Psoas muscle (tissue), 8 donors: ENCODE measurements at regions of chr11 and their contacts with region 1.

Region 1: GRCh38 chr11:118746988-118747585 is 43.9 kb downstream of the DDX6 start:
- DNase-seq: no peak
- ATAC-seq: peak in 1 of 4 donors; percentile 18
- H3K4me3 ChIP-seq: no peak overlapping the region
- H3K27ac ChIP-seq: no peak overlapping the region
- H3K4me1 ChIP-seq: no peaks in the 10 kb centered on the region
- H3K27me3 ChIP-seq: no peaks in the 10 kb centered on the region
- CTCF ChIP-seq: no peak

Region 2: GRCh38 chr11:118763041-118763440 is 16.0 kb after region 1 on chr11:
- intact Hi-C with region 1: no loop called
- DNase-seq: no peak
- ATAC-seq: no peak
- H3K4me3 ChIP-seq: no peak overlapping the region
- H3K27ac ChIP-seq: no peak overlapping the region
- H3K4me1 ChIP-seq: peaks cover 5% of the 10 kb centered on the region
- H3K27me3 ChIP-seq: no peaks in the 10 kb centered on the region
- CTCF ChIP-seq: no peak

Region 3: GRCh38 chr11:118774032-118774431 is 26.9 kb after region 1 on chr11:
- intact Hi-C with region 1: no loop called
- DNase-seq: no peak
- ATAC-seq: no peak
- H3K4me3 ChIP-seq: no peak overlapping the region
- H3K27ac ChIP-seq: no peak overlapping the region
- H3K4me1 ChIP-seq: peaks cover 53% of the 10 kb centered on the region
- H3K27me3 ChIP-seq: no peaks in the 10 kb centered on the region
- CTCF ChIP-seq: no peak

Region 4: DNA sequence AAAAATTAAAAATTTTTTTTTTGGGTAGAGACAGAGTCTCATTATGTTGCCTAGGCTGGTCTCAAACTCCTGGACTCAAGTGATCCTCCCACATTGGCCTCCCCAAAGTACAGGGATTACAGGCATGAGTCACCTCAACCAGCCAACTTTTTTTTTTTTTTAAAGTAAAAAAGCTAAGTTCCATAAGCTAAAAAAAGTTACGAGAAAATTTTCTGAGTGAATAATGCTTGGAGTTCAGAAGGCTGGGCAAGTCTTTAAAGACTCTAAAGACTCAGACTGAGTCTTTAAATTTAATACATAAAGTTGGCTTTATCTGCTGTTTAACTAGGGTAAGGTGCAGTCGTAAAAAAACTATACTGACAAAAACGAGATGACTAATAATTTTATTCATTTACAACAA is 38.3 kb after region 1 on chr11:
- intact Hi-C with region 1: loop called in 1 of 2 experiments (anchors 2 kb)
- DNase-seq: no peak
- ATAC-seq: no peak
- H3K4me3 ChIP-seq: peak overlapping the region; percentile 15
- H3K27ac ChIP-seq: peak overlapping the region; percentile 43
- H3K4me1 ChIP-seq: peaks cover 70% of the 10 kb centered on the region
- H3K27me3 ChIP-seq: no peaks in the 10 kb centered on the region
- CTCF ChIP-seq: no peak